Heart right ventricle (tissue), 16 donors: ENCODE measurements at regions of chr18 and their contacts with region 1.

Region 1: DNA sequence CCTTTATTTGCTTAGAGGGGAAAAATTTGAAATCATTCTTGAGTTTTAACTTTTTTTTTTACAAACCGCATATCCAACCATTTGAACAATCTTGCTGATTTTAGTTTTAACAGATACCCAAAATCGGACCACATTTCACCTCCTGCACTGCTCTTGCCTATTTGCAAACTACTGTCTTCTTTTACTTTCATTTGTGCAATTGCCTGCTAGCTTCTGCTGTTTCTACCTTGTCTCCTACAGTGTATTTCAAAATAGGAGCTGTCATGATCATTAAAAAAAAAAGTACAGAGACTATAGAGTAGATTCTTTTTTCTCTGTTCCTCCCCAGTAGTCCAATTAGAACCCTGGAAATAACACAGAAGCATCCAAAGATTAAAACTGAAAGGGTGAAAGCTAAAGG is 1081.2 kb downstream of the SOCS6 start:
- DNase-seq: no peak
- ATAC-seq: no peak
- H3K4me3 ChIP-seq: no peak overlapping the region
- H3K27ac ChIP-seq: no peak overlapping the region
- H3K4me1 ChIP-seq: no peaks in the 10 kb centered on the region
- H3K27me3 ChIP-seq: no peaks in the 10 kb centered on the region
- CTCF ChIP-seq: no peak

Region 2: DNA sequence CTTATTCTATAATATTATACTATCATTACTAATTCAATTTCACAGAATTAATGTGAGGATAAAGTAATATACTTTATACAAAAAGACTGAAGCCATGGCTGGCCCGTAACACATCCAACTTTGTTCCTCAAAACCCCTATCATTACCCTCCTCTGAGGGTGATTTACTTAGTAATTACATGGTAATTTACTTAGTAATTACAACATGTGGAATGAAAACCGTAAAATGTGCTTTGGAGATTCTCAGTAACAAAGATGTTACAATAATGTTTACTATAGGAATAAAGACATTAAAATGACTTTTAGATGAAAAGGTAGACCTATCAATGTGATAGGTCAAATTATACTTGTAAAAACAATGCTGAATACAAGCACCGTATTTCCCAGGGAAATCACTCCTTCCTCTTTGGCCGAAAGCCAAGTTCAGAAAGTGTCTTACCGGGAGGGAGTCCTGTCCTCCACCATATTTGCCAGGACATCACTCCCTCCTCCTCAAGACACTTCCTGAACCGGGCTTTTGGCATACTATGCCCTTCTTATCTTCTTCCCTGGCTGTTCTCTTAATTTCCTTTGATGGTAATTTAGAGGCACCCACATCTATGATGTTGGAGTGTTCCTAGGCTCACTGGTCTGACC is 33.4 kb before region 1 on chr18:
- intact Hi-C with region 1: loop called in 1 of 10 experiments (anchors 2 kb)
- DNase-seq: no peak
- ATAC-seq: no peak
- H3K4me3 ChIP-seq: no peak overlapping the region
- H3K27ac ChIP-seq: no peak overlapping the region
- H3K4me1 ChIP-seq: no peaks in the 10 kb centered on the region
- H3K27me3 ChIP-seq: no peaks in the 10 kb centered on the region
- CTCF ChIP-seq: no peak

Region 3: DNA sequence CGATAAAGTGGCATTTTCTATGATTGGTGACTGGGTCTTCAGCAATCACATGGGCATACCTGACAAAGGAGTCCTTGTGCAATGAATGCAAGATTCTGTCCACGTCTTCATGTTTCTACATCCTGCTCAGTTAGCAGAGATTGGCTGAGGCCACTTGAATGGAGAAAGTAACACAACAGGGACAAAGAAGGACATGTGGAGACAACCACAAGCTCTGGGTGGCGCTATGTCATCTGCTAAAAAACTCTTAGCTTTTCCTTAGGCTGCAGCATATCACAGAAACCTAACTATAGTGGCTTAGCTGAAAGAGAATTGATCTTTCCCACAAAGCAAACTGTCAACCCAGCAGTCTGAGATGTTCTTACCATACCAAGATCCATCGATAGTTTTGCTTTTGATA is 28.4 kb after region 1 on chr18:
- intact Hi-C with region 1: no loop called
- DNase-seq: no peak
- ATAC-seq: no peak
- H3K4me3 ChIP-seq: no peak overlapping the region
- H3K27ac ChIP-seq: no peak overlapping the region
- H3K4me1 ChIP-seq: no peaks in the 10 kb centered on the region
- H3K27me3 ChIP-seq: no peaks in the 10 kb centered on the region
- CTCF ChIP-seq: no peak

Region 4: GRCh38 chr18:71598374-71598773 is 228.3 kb after region 1 on chr18:
- intact Hi-C with region 1: no loop called
- DNase-seq: no peak
- ATAC-seq: no peak
- H3K4me3 ChIP-seq: no peak overlapping the region
- H3K27ac ChIP-seq: no peak overlapping the region
- H3K4me1 ChIP-seq: no peaks in the 10 kb centered on the region
- H3K27me3 ChIP-seq: no peaks in the 10 kb centered on the region
- CTCF ChIP-seq: no peak